PC-3 (cell line): ENCODE measurements at regions of chr9 and their contacts with region 1.

Region 1: GRCh38 chr9:114779352-114779845 is 26.4 kb downstream of the TNFSF15 start:
- DNase-seq: peak; percentile 89
- ATAC-seq: peak; percentile 94
- H3K4me3 ChIP-seq: no peak overlapping the region
- H3K27ac ChIP-seq: peak overlapping the region; percentile 61
- H3K4me1 ChIP-seq: peaks cover 17% of the 10 kb centered on the region
- H3K27me3 ChIP-seq: no peaks in the 10 kb centered on the region
- CTCF ChIP-seq: no peak

Region 2: DNA sequence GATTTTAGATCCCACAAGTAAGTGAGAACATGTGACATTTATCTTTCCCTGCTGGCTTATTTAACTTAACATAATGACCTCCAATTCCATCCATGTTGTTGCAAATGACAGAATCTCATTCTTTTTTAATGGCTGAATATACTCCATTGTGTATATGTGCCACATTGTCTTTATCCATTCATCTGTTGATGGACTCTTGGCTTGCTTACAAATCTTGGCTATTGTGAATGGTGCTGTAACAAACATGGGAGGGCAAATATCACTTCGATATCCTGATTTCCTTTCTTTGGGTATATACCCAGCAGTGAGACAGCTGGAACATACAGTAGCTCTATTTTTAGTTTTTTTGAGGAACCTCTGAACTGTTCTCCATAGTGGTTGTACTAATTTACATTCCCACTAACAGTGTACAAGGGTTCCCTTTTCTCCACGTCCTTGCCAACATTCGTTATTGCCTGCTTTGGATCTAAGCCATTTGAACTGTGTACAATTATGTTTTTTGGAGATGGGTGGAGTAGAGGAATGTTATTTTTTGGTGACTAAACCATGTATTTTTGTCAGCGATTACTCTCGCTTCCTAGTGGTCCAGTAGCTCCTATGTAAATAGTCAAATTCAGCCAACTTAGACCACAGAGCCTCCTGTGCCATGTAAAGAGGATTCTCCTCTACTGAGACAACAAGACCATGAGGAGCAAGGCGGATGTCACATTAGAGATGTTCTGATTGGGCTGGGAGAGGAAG is 34.1 kb before region 1 on chr9:
- CTCF ChIA-PET with region 1: no interaction called
- POLR2A ChIA-PET with region 1: no interaction called
- intact Hi-C with region 1: loop called (anchors 5 kb)
- DNase-seq: peak; percentile 83
- ATAC-seq: peak; percentile 83
- H3K4me3 ChIP-seq: no peak overlapping the region
- H3K27ac ChIP-seq: peak overlapping the region; percentile 50
- H3K4me1 ChIP-seq: peaks cover 25% of the 10 kb centered on the region
- H3K27me3 ChIP-seq: no peaks in the 10 kb centered on the region
- CTCF ChIP-seq: no peak

Region 3: DNA sequence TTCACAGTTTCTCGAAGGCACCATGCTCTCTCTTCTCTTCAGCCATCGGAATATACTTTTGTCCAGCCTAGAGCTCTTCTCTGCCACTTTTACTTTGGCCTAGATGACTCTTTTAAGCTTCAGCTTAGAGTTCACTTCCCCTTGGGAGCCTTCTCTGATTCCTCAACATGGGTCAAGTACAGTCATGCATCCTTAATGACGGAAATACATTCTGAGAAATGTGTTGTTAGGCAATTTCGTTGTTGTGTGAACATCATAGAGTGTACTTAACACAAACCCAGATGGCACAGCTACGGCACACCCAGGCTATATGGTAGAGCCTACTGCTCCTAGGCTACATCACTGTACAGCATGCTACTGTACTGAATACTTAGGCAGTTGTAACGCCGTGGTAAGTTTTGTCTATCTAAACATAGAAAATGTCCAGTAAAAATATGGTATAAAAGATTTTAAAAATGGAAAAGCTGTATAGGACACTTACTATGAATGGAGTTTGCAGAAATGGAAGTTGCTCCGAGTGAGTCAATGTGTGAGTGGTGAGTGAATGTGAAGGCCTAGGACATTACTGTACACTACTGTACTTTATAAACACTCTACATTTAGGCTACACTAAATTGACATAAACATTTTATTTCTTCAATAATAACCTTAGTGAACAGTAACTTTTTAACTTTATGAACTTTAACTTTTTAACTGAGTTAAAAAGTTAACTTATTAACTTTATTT is 41.5 kb after region 1 on chr9:
- CTCF ChIA-PET with region 1: no interaction called
- POLR2A ChIA-PET with region 1: no interaction called
- intact Hi-C with region 1: no loop called
- DNase-seq: no peak
- ATAC-seq: no peak
- H3K4me3 ChIP-seq: no peak overlapping the region
- H3K27ac ChIP-seq: no peak overlapping the region
- H3K4me1 ChIP-seq: no peaks in the 10 kb centered on the region
- H3K27me3 ChIP-seq: no peaks in the 10 kb centered on the region
- CTCF ChIP-seq: no peak

Region 4: DNA sequence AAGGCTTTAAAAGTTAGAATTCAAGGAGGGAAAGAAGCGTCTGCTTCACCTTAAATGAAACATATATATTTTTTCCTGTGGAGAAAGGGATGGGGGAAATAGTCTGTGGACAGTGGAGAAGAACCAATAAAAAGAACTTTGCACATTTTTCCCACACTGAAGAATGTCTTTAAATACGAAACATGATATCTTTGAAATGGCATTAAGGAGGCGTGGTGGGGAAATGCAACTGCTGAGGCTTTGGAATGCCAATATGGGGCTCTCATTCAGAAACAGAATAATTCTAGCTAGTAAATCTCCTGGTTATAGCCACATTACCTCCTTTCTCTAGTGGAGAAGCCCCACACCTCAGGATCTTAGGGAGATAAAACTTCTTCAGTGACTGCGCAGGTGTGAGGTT is 291.8 kb after region 1 on chr9:
- CTCF ChIA-PET with region 1: no interaction called
- POLR2A ChIA-PET with region 1: no interaction called
- intact Hi-C with region 1: no loop called
- DNase-seq: no peak
- ATAC-seq: no peak
- H3K4me3 ChIP-seq: no peak overlapping the region
- H3K27ac ChIP-seq: no peak overlapping the region
- H3K4me1 ChIP-seq: no peaks in the 10 kb centered on the region
- H3K27me3 ChIP-seq: no peaks in the 10 kb centered on the region
- CTCF ChIP-seq: no peak